Activated naive CD4-positive, alpha-beta T cell treated with anti-CD3 and anti-CD28 coated beads for 36 hours (primary cell): ENCODE measurements at regions of chr2 and their contacts with region 1.

Region 1: DNA sequence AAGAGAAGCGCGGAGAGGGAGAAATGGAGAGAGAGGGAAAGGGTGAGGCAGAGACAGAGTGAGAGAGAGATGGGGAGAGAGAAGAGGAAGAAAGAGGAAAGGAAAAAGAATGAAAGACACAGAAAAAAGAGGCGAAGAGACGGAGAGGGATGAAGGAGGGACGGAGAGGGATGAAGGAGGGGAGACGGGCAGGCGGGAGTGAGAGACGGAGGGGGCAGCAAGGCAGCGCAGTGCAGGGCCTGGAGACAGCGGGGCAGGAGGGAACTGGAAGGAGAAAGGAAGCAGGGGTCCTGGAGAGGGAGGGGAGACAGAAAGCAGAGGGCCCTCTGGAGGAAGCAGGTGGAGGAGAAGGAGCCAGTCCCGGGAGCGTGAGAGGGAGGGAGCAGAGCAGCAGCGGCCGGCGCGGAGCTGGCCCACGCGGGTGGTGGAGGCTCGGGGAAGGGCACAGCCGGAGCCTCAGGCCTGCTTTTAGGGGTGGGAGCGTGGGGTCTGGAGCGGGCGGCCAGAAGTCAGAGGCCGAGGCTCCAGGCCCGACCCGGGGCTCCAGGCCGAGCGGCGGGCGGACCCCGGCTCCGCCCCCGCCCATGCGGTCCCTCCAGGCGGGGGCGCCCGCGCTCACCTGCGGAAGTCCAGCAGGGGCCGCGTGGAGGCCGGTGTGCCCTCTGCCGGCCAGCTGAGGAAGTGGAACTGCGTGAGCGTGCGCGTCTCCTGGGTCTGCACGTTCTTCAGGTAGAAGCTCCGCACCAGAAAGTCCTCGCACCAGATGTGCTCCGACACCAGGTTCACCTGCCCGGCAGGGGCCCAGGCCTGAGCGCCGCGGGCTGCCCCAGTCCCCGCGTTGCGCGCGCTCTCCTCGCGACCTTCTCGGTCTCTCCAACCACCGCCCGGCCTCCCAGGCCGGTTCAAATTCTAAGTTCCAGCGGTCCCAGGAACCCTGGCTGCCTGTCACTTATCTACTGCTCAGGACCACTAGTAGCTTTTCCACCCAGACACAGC is 14.5 kb downstream of the PTPRN start:
- DNase-seq: peak; percentile 89
- H3K4me3 Mint-ChIP-seq: peak overlapping the region; percentile 77
- H3K27ac Mint-ChIP-seq: no peak overlapping the region
- H3K4me1 Mint-ChIP-seq: peaks cover 20% of the 10 kb centered on the region
- H3K27me3 Mint-ChIP-seq: peaks cover 3% of the 10 kb centered on the region

Region 2: DNA sequence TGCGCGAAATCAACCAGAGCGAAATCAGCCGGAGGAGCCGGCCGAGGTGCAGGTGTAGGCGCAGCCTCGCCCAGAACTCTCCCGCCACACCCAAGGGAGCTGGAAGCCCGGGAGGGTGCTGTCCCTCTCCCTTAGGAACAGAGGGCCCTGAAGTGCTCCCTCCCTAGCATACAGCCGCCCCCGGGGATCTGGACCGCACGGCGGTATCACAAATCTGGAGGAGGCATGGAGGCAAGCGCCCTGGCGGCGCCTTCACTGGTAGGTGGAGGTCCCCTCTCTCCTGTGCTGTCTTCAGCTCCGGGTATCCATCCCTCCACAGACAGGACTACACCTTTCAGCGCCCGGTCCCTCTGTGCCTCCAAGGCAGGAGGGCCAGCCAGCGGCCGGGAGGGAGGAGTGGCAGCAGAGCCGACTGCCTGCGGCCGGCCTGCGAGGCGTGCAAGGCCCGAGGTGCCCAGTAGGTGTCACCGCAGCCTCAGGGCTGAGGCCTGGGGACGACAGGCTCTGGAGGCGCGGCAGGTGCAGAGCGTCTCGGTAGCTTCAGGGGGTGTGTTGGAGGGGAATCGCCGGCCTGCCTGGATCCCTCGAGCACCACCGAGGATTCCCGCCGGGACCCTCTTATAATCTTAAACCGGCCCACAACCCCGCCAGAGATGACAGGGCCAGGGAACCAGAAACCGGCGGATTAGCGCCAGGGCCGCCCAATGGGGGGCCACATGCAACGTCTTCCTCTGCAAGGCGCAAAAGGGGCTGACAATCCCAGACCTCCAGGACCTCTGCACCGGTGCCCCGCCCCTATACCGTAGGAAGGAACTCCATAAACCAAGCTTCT is 236.7 kb before region 1 on chr2:
- CTCF ChIA-PET with region 1: interaction called, 3 read pairs
- intact Hi-C with region 1: loop called (anchors 1 kb)
- DNase-seq: peak; percentile 85
- H3K4me3 Mint-ChIP-seq: peak overlapping the region; percentile 39
- H3K27ac Mint-ChIP-seq: no peak overlapping the region
- H3K4me1 Mint-ChIP-seq: peaks cover 18% of the 10 kb centered on the region
- H3K27me3 Mint-ChIP-seq: peaks cover 55% of the 10 kb centered on the region

Region 3: GRCh38 chr2:219171231-219171651 is 123.4 kb before region 1 on chr2:
- CTCF ChIA-PET with region 1: interaction called, 44 read pairs
- intact Hi-C with region 1: loop called (anchors 1 kb)
- DNase-seq: peak; percentile 51
- H3K4me3 Mint-ChIP-seq: no peak overlapping the region
- H3K27ac Mint-ChIP-seq: no peak overlapping the region
- H3K4me1 Mint-ChIP-seq: peaks cover 25% of the 10 kb centered on the region
- H3K27me3 Mint-ChIP-seq: no peaks in the 10 kb centered on the region

Region 4: DNA sequence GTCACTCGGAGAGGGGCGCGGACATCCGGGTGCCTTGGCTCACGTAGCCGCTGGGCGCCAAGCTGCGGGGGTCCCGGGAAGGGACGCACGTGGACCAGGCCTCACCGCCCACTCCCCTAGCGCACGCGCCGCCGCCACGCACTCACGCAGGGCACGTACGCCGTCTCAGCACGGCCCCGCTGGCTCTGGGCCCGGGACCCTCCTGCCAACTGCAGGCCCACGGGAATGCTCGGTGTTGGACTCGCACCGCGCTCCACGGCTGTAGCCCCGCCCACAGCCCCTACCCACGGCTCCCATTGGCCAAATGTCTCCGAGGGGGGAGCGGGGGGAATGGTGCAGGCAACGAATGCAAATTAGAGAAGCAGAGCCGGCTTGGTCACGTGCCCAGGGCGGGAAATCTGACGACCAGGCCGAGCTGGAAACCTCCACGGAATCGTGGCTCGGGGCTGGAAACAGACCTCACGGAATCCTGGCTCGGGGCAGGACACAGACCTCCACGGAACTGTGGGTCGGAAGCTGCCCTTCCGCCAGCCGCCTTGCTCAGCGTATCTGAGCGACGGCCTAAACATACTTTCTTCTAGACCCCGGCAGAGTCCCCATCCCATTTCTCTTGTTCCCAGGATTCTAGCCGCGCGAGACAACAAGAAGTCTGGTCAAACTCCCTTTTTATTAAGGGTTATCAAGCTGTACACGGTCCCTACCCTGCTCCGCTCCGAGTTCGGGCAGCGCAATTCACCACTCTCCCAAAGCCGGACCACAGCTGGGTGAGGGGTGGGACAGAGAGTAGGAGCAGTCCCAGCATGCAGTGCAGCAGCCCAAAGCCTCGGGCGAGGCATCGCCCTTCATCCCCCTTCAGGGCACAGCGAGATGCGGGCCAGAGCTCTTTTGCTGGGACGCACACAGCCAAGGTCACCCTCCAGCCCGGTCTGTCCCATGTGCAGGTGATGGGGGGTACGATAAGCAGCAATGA is 75.6 kb before region 1 on chr2 and contains the start of gene ABCB6:
- CTCF ChIA-PET with region 1: interaction called, 8 read pairs
- intact Hi-C with region 1: loop called (anchors 1 kb)
- DNase-seq: peak; percentile 89
- H3K4me3 Mint-ChIP-seq: peak within 1 kb of the TSS; percentile 78
- H3K27ac Mint-ChIP-seq: peak within 1 kb of the TSS; percentile 56
- H3K4me1 Mint-ChIP-seq: peaks cover 25% of the 10 kb centered on the region
- H3K27me3 Mint-ChIP-seq: no peaks in the 10 kb centered on the region
- total RNA-seq, gene ABCB6: 7.0 to 7.5 TPM

Region 5: GRCh38 chr2:219253753-219254590 is 40.7 kb before region 1 on chr2 and contains the start of gene TUBA4A:
- CTCF ChIA-PET with region 1: interaction called, 76 read pairs
- intact Hi-C with region 1: loop called (anchors 1 kb)
- DNase-seq: peak; percentile 89
- H3K4me3 Mint-ChIP-seq: peak within 1 kb of the TSS; percentile 70
- H3K27ac Mint-ChIP-seq: peak within 1 kb of the TSS; percentile 95
- H3K4me1 Mint-ChIP-seq: peaks cover 49% of the 10 kb centered on the region
- H3K27me3 Mint-ChIP-seq: no peaks in the 10 kb centered on the region
- total RNA-seq, gene TUBA4A: 112 to 116 TPM

Region 6: GRCh38 chr2:219352448-219353023 is 57.9 kb after region 1 on chr2:
- CTCF ChIA-PET with region 1: interaction called, 11 read pairs
- intact Hi-C with region 1: loop called (anchors 1 kb)
- DNase-seq: peak; percentile 86
- H3K4me3 Mint-ChIP-seq: no peak overlapping the region
- H3K27ac Mint-ChIP-seq: no peak overlapping the region
- H3K4me1 Mint-ChIP-seq: no peaks in the 10 kb centered on the region
- H3K27me3 Mint-ChIP-seq: peaks cover 34% of the 10 kb centered on the region